Prostate gland (tissue), 2 donors: ENCODE measurements at regions of chr1 and their contacts with region 1.

Region 1: GRCh38 chr1:108746372-108747205 is at the start of gene STXBP3:
- DNase-seq: peak; percentile 97
- H3K4me3 ChIP-seq: peak within 1 kb of the TSS; percentile 91 to 94
- H3K27ac ChIP-seq: peak within 1 kb of the TSS; percentile 98 to 99
- H3K4me1 ChIP-seq: no peaks in the 10 kb centered on the region
- H3K27me3 ChIP-seq: no peaks in the 10 kb centered on the region
- CTCF ChIP-seq: peak; percentile 93 to 98 (median 97)
- POLR2A ChIP-seq: peak; percentile 100
- total RNA-seq, gene STXBP3: 41.1 to 55.4 TPM

Region 2: DNA sequence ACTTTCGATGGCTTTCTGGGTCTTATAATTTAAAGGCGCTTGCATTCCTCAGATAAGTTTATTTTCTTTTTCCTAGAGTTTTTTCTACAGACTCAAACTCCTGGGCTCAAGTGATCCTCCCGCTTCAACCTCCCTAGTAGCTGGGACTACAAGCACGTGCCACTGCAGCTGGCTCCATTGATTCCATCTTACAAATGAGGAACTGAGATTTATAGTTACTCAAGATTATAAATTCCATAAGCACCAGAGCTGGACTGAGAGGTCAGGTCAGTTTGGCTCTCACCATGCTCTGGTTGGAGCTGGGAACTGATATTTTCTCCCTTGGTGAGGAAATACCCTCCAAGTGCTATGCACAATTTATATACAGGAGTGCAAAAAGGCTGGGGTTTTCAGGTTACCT is 67.9 kb before region 1 on chr1:
- intact Hi-C with region 1: no loop called
- DNase-seq: no peak
- H3K4me3 ChIP-seq: no peak overlapping the region
- H3K27ac ChIP-seq: no peak overlapping the region
- H3K4me1 ChIP-seq: no peaks in the 10 kb centered on the region
- H3K27me3 ChIP-seq: no peaks in the 10 kb centered on the region
- CTCF ChIP-seq: no peak
- POLR2A ChIP-seq: no peak

Region 3: GRCh38 chr1:108691942-108692723 is 54.5 kb before region 1 on chr1 and contains the start of gene PRPF38B:
- intact Hi-C with region 1: loop called (anchors 10 kb)
- DNase-seq: peak; percentile 94
- H3K4me3 ChIP-seq: peak within 1 kb of the TSS; percentile 76 to 84
- H3K27ac ChIP-seq: peak within 1 kb of the TSS; percentile 98 to 99
- H3K4me1 ChIP-seq: no peaks in the 10 kb centered on the region
- H3K27me3 ChIP-seq: no peaks in the 10 kb centered on the region
- CTCF ChIP-seq: peak in 1 of 4 experiments; percentile 9
- POLR2A ChIP-seq: peak; percentile 84
- total RNA-seq, gene PRPF38B: 18.9 to 24.2 TPM

Region 4: GRCh38 chr1:108816049-108816893 is 69.7 kb after region 1 on chr1:
- intact Hi-C with region 1: loop called (anchors 5 kb)
- DNase-seq: no peak
- H3K4me3 ChIP-seq: no peak overlapping the region
- H3K27ac ChIP-seq: peak overlapping the region; percentile 19 to 46
- H3K4me1 ChIP-seq: no peaks in the 10 kb centered on the region
- H3K27me3 ChIP-seq: no peaks in the 10 kb centered on the region
- CTCF ChIP-seq: no peak
- POLR2A ChIP-seq: no peak

Region 5: DNA sequence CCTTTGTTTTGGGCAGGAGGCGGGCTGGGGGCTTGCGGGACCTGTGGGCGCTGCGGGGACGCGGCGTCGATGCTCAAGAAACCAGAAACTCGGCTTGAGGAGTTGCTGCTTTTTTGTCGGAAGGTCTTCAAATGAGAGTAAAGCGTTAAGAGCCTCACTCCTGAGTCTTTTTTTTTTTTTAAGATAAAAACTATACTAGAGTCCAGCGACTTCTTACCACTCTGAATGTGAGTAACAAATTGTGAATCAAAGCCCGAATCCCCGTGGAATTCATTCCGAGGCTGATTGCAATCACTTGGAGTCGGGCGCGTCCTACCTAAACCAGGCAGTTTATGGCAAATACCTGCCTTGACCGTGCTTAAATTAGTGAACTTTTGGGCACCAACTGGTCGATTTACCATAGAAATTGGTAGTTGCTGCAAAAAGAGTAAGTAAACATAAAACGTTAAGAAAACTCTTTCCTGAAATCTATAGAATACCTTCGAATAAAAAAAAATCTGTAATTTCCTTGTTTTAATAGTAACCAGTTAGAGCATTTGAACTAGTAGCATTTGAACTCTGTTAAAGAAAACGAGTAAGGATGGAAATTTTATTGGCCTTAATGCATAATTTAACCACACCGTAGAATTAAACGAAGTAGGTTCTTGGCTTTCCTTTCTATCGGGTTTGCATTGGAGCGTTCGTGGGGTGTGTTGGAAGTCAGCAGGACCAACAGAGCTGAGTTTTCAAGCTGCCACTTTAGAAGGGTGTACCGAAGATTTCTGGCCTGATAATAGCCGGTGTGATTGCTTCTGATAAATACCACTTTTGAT is 131.0 kb after region 1 on chr1:
- intact Hi-C with region 1: loop called (anchors 10 kb)
- DNase-seq: no peak
- H3K4me3 ChIP-seq: peak overlapping the region; percentile 85 to 94
- H3K27ac ChIP-seq: peak overlapping the region; percentile 73 to 81
- H3K4me1 ChIP-seq: no peaks in the 10 kb centered on the region
- H3K27me3 ChIP-seq: no peaks in the 10 kb centered on the region
- CTCF ChIP-seq: no peak
- POLR2A ChIP-seq: no peak